ENCODE measurements at regions of chr1 and their contacts with region 1.

Region 1: GRCh38 chr1:218330043-218330623 is 15.0 kb upstream of the TGFB2 start:
- DNase-seq: no peak
- H3K4me3 Mint-ChIP-seq: no peak overlapping the region
- H3K27ac Mint-ChIP-seq: no peak overlapping the region
- H3K4me1 Mint-ChIP-seq: no peaks in the 10 kb centered on the region
- H3K27me3 Mint-ChIP-seq: no peaks in the 10 kb centered on the region

Region 2: DNA sequence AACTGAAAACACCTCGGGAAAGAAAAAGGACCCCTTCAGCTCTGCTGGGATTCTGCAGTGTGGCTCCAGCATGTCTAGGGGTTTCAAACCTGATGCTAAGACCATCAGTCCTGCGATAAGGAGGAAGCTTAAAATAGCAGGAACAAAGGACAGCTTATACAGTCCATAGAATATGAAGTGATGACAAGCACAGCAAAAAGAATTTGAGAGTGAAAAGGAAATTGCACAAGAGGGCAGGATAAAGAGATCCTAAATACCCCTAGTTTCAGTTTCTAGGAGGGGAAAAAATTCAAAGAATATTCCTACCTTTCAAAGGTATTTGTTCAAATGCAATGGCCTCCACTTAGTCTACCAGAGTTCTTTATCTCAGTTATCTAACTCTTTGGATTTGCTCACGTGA is 186.4 kb after region 1 on chr1:
- CTCF ChIA-PET with region 1: interaction called, 10 read pairs
- intact Hi-C with region 1: loop called (anchors 1 kb)
- DNase-seq: no peak
- H3K4me3 Mint-ChIP-seq: no peak overlapping the region
- H3K27ac Mint-ChIP-seq: no peak overlapping the region
- H3K4me1 Mint-ChIP-seq: no peaks in the 10 kb centered on the region
- H3K27me3 Mint-ChIP-seq: peaks cover 16% of the 10 kb centered on the region

Region 3: GRCh38 chr1:218642033-218642998 is 312.2 kb after region 1 on chr1:
- CTCF ChIA-PET with region 1: no interaction called
- intact Hi-C with region 1: no loop called
- DNase-seq: no peak
- H3K4me3 Mint-ChIP-seq: no peak overlapping the region
- H3K27ac Mint-ChIP-seq: no peak overlapping the region
- H3K4me1 Mint-ChIP-seq: no peaks in the 10 kb centered on the region
- H3K27me3 Mint-ChIP-seq: no peaks in the 10 kb centered on the region

Region 4: DNA sequence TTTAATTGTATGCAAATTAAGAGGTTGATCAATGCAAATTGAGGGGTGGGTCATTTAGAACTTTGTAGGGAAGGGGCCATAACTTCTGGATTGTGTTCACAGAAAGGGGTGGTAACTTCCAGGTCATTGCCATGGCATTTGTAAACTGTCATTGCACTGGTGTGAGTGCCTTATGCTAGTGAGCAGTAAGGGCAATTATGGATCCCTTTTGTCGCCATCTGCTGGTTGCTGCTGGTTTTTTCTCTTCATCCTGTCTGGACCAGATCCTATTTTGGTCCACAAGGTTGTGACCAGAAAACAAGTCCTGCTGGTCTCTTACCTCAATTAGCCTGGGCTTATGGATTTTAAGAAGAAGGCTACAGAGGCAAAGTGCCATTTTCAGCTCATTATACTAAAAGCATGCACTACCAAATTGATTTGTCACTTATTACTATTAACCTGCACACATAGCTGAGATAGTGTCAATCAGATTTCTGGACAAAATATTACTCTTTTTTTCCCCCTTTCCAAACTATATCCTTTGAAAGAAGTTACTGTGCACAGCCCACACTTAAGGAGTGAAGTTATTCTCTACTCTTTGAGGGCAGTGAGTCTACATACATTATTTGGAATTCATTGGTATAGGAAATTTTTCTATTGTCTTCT is 1086.6 kb after region 1 on chr1:
- CTCF ChIA-PET with region 1: no interaction called
- intact Hi-C with region 1: loop called (anchors 1 kb)
- DNase-seq: peak; percentile 78
- H3K4me3 Mint-ChIP-seq: no peak overlapping the region
- H3K27ac Mint-ChIP-seq: no peak overlapping the region
- H3K4me1 Mint-ChIP-seq: no peaks in the 10 kb centered on the region
- H3K27me3 Mint-ChIP-seq: no peaks in the 10 kb centered on the region

Region 5: DNA sequence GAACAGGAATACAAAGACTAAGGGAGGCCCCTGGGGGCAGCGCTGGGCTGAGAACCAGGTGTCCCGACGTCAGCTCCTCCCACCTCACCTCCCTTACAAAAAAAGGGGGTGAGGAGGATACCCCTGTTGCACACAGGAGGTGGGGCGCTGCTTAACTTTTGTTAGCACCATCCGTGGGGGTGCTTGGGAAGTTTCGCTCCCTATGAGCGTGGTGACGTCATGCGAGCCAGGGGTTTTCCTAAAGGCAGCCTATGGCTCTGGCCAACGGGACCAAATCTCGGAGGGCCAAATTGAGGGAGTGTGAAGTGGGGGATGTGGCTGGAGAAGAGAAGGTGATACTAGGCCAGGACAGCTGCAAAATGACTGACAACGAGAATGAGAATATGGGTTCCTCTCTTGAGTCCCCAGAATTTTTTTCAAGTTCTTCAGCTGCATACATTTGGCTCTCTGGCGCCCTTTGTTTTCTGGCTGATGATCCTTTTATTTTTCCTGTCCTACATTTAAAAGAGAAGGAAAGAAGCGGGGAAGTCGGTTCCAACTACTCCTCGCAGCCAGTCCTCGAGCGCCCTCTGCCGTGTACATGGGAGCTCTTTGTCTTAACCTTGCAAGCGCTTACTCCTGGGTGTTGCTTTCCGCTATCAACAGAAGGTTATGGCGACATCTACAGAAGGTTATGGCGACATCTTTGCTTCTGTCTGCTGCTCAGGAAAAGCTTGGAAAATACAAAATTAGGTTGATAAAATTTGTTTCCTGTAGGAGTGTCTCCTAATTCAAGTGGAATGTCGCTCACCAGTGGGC is 1330.7 kb after region 1 on chr1:
- CTCF ChIA-PET with region 1: no interaction called
- intact Hi-C with region 1: loop called (anchors 2 kb)
- DNase-seq: peak; percentile 68
- H3K4me3 Mint-ChIP-seq: no peak overlapping the region
- H3K27ac Mint-ChIP-seq: no peak overlapping the region
- H3K4me1 Mint-ChIP-seq: no peaks in the 10 kb centered on the region
- H3K27me3 Mint-ChIP-seq: peaks cover 26% of the 10 kb centered on the region

Measured in activated naive CD4-positive, alpha-beta T cell treated with anti-CD3 and anti-CD28 coated beads for 36 hours (primary cell).